A673 (cell line): ENCODE measurements at regions of chr16 and their contacts with region 1.

Region 1: DNA sequence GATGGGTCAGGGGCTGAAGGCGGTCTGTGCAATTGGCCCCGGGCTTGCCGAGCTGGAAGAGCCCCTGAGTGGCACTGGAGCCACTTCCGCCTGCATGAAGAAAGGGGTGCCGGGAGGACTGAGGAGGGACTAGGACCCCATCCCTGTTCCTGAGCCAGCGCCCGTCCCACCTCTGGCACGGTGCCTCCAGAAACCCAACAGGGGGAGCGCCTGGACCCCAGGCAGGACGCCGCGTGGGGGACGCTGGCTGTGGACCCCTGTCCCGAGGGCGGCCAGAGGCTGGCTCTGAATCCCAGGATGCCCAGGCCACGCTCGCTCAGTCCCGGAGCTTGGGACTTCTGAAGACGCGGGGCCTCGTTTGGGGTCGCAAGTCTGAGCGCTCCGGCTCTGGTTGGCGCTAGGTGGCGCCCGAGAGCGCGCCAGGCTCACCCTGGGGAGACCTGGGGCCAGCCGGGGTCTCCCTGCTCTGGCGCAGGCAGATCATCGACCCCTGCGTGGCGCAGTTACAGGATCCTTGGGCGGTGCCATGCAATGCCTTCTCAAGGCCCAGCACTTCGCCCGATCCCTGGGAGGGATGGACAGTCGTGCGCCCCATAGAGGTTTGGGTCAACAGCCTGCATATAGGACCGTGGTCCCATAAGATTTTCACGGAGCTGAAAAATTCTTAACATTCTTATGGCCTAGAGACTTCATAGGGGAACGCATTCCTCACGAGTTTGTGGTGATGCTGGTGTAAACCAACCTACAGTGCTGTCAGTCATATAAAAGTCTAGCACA is 58.5 kb upstream of the CREBBP start:
- DNase-seq: peak; percentile 81
- H3K4me3 ChIP-seq: peak overlapping the region; percentile 47
- H3K27ac ChIP-seq: no peak overlapping the region
- H3K4me1 ChIP-seq: no peaks in the 10 kb centered on the region
- H3K27me3 ChIP-seq: no peaks in the 10 kb centered on the region
- CTCF ChIP-seq: peak; percentile 97

Region 2: GRCh38 chr16:3075523-3075915 is 863.5 kb before region 1 on chr16:
- CTCF ChIA-PET with region 1: no interaction called
- POLR2A ChIA-PET with region 1: interaction called, 14 read pairs
- intact Hi-C with region 1: no loop called
- DNase-seq: no peak
- H3K4me3 ChIP-seq: no peak overlapping the region
- H3K27ac ChIP-seq: no peak overlapping the region
- H3K4me1 ChIP-seq: no peaks in the 10 kb centered on the region
- H3K27me3 ChIP-seq: peaks cover 15% of the 10 kb centered on the region
- CTCF ChIP-seq: no peak

Region 3: GRCh38 chr16:3890091-3890490 is 48.9 kb before region 1 on chr16:
- CTCF ChIA-PET with region 1: no interaction called
- POLR2A ChIA-PET with region 1: no interaction called
- intact Hi-C with region 1: no loop called
- DNase-seq: no peak
- H3K4me3 ChIP-seq: no peak overlapping the region
- H3K27ac ChIP-seq: no peak overlapping the region
- H3K4me1 ChIP-seq: no peaks in the 10 kb centered on the region
- H3K27me3 ChIP-seq: no peaks in the 10 kb centered on the region
- CTCF ChIP-seq: no peak

Region 4: GRCh38 chr16:4244254-4245076 is 305.4 kb after region 1 on chr16:
- CTCF ChIA-PET with region 1: interaction called, 15 read pairs
- POLR2A ChIA-PET with region 1: no interaction called
- intact Hi-C with region 1: no loop called
- DNase-seq: peak; percentile 78
- H3K4me3 ChIP-seq: no peak overlapping the region
- H3K27ac ChIP-seq: peak overlapping the region; percentile 22
- H3K4me1 ChIP-seq: no peaks in the 10 kb centered on the region
- H3K27me3 ChIP-seq: no peaks in the 10 kb centered on the region
- CTCF ChIP-seq: no peak